ENCODE measurements at regions of chr1 and their contacts with region 1.

Region 1: DNA sequence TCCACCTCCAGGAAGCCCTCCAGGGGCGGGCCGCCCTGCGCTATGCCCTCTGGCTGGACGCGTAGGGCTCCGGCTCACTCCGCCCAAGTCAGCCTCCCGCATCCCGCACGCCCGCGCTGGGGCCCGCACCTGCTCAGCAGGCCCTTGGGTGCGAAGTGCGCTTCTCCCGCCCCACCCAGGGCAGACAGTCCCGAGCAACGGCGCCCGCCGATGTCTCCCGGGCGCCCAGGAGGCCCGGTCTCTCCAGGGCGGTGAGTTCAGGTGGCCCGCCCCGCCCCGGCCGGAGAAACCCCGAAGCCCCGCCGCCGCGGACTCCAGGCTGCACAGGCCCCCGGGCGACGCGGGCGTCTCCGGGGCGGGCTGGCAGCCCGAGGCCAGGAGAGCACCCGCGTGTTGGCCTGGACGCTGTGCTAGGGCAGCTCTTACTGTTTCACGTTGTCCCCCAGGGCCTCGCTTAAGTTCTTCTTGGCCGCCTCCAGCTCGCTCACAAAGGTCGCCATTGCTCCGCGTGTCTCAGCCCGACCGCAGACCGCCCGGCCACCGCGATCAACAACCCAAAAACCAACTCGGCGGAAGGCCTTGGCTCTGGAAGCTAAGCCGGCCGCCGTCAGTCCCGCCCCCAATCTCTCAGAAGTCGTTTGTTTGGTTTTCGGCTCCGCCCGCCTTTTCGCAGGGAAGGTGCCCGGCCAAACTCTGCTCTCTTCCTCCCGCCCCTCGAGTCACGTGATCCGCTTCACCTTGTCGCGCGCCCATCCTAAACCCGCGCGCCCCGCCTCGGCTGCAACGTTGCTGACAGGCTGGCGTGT is at the start of gene TADA1:
- DNase-seq: peak; percentile 99
- H3K4me3 ChIP-seq: peak within 1 kb of the TSS; percentile 77 to 91 (median 80)
- H3K27ac ChIP-seq: peak within 1 kb of the TSS; percentile 88 to 97 (median 93)
- H3K4me1 ChIP-seq: peaks cover 0 to 50% (median 36%) of the 10 kb centered on the region in 4 donors
- H3K27me3 ChIP-seq: no peaks in the 10 kb centered on the region
- CTCF ChIP-seq: no peak
- EP300 ChIP-seq: no peak
- POLR2A ChIP-seq: peak in 1 of 2 donors; percentile 40
- total RNA-seq, gene TADA1: 8.3 to 16.4 (median 11.2) TPM

Region 2: GRCh38 chr1:166838766-166839599 is 37.0 kb before region 1 on chr1 and contains the start of gene POGK:
- intact Hi-C with region 1: loop called (anchors 1 kb)
- DNase-seq: peak; percentile 96
- H3K4me3 ChIP-seq: peak within 1 kb of the TSS; percentile 56 to 82 (median 77)
- H3K27ac ChIP-seq: peak within 1 kb of the TSS; percentile 87 to 92 (median 88)
- H3K4me1 ChIP-seq: peaks cover 0 to 51% (median 48%) of the 10 kb centered on the region in 4 donors
- H3K27me3 ChIP-seq: no peaks in the 10 kb centered on the region
- CTCF ChIP-seq: no peak
- EP300 ChIP-seq: no peak
- POLR2A ChIP-seq: peak in 1 of 2 donors; percentile 27
- total RNA-seq, gene POGK: 22.2 to 23.5 (median 22.9) TPM

Region 3: GRCh38 chr1:167022384-167022783 is 146.4 kb after region 1 on chr1:
- intact Hi-C with region 1: no loop called
- DNase-seq: no peak
- H3K4me3 ChIP-seq: no peak overlapping the region
- H3K27ac ChIP-seq: no peak overlapping the region
- H3K4me1 ChIP-seq: no peaks in the 10 kb centered on the region
- H3K27me3 ChIP-seq: no peaks in the 10 kb centered on the region
- CTCF ChIP-seq: no peak
- EP300 ChIP-seq: no peak
- POLR2A ChIP-seq: no peak

Region 4: DNA sequence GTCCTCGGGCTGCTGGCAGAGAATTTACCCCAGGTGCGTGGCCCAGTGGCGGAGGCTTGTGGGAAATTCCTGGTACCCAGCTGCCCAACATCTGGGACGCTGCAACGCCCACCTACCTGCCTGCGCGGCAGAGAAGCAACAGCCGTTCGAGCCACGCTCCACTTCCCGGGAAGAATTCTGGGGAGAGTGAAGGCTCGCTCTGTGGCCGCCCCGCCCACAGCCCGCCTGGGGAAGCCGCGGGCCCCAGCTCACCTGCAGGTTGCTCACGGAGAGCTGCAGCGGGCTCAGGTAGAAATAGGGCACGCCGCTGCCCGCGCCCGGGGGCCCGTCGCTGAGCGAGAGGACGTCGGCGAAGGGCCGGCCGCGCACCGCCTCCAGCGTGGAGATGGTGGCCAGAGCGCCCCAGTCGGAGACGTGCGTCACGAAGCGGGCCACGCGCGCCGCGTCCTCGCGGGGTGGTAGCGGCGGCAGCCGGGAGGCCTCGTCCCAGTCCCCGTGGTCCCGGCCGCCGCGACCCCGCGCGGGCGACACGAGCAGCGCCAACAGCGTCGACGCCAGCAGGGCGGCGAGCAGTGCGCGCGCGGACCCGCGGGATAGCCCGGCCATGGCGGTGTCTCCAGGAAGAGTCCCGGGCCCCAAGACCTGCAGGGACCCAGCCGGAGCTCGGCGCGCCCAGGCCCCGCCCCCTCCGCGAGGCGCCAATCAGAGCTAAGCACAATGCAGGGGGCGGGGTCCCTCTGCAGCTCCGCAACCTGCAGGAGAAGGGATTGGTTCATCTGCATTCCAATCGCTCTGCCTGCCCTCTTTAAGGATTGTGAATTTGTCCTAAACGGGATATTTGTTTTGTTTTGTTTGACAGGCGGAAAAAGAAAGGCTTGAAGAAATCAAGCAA is 677.4 kb after region 1 on chr1 and contains the start of gene CREG1:
- intact Hi-C with region 1: loop called (anchors 10 kb)
- DNase-seq: peak; percentile 97
- H3K4me3 ChIP-seq: peak within 1 kb of the TSS; percentile 59 to 97 (median 84)
- H3K27ac ChIP-seq: peak within 1 kb of the TSS; percentile 78 to 87 (median 86)
- H3K4me1 ChIP-seq: peaks cover 0 to 41% (median 31%) of the 10 kb centered on the region in 4 donors
- H3K27me3 ChIP-seq: no peaks in the 10 kb centered on the region
- CTCF ChIP-seq: no peak
- EP300 ChIP-seq: no peak
- POLR2A ChIP-seq: peak; percentile 28 to 51
- total RNA-seq, gene CREG1: 139 to 180 (median 168) TPM